PC-3 (cell line): ENCODE measurements at regions of chr15 and their contacts with region 1.

Region 1: DNA sequence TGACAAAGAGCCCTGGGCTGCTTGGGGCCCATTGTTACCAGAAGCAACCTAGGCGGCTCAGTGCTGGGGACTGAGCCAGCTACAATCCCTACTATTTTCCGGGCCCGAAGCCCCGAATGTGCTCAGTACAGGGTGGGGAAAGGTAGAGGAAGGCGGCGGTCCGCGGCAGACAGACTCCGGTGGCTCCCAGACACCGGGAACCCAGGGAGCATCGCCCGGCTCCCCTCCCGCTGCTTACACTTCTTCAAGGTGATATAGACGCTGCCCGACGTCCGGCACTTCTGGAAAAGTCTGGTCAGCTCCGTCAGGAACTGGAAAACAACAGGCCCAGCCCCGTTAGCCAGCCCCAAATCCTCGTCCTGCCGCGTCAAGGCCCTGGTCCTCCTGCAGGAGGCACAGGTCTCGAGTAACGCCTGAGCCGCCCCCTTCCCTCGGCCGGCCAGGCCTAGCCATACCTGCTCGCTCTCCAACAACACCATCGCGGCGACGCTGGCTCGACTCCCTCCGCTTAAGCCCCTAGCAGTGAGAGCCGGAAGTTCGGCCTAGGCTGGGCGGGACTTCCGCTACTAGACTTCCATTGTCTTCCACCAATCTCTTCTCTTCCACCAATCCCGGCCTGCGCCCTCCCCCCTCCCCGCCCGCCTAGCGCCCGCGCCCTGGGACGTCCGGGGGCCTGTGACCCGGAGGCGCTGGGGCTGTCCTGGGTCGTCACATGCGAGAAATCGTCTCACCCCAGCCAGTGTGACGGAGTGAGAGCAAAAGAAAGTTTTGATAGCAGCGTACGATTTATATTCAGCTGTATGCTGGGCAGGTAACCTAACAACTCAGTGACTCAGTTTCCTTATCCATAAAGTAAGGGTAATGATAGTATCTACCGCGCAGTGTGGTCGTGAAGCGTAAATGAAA is at the start of gene SRP14:
- DNase-seq: peak; percentile 92
- ATAC-seq: peak; percentile 96
- H3K4me3 ChIP-seq: peak within 1 kb of the TSS; percentile 85
- H3K27ac ChIP-seq: peak within 1 kb of the TSS; percentile 39
- H3K4me1 ChIP-seq: peaks cover 8% of the 10 kb centered on the region
- H3K27me3 ChIP-seq: no peaks in the 10 kb centered on the region
- CTCF ChIP-seq: no peak
- total RNA-seq, gene SRP14: 362 and 378 TPM in 2 replicates

Region 2: DNA sequence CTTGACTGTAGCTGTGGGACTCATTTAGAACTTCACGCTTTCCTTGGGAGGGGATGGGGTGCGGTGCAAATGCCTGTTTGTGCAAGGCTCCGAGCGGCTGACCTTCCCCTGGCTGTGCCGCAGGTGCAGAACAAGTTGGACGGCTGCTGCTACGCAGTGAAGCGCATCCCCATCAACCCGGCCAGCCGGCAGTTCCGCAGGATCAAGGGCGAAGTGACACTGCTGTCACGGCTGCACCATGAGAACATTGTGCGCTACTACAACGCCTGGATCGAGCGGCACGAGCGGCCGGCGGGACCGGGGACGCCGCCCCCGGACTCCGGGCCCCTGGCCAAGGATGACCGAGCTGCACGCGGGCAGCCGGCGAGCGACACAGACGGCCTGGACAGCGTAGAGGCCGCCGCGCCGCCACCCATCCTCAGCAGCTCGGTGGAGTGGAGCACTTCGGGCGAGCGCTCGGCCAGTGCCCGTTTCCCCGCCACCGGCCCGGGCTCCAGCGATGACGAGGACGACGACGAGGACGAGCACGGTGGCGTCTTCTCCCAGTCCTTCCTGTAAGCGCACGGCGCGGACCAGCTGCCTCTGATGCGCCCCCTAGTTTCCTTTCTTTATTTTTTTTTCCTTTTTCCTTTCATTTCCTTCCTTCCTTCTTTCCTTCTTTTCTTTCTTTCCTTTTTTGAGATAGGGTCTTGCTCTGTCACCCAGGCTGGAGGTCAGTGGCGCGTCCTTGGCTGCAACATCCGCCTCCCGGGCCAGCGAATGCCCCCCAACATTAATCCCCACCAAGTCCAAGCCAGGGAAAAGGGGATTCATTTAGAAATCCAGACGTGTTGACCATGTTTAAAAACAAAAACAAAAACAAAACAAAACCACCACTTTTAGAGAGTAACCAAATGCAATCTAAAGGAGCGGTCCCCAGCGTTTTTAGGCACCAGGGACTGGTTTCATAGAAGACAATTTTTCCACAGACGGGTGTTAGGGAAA is 62.3 kb before region 1 on chr15:
- CTCF ChIA-PET with region 1: no interaction called
- POLR2A ChIA-PET with region 1: no interaction called
- intact Hi-C with region 1: loop called (anchors 5 kb)
- DNase-seq: peak; percentile 75
- ATAC-seq: peak; percentile 97
- H3K4me3 ChIP-seq: peak overlapping the region; percentile 67
- H3K27ac ChIP-seq: peak overlapping the region; percentile 2; the same call in 1 of the 2 replicates
- H3K4me1 ChIP-seq: peaks cover 14% of the 10 kb centered on the region; the same call in 1 of the 2 replicates
- H3K27me3 ChIP-seq: no peaks in the 10 kb centered on the region
- CTCF ChIP-seq: peak; percentile 78